ENCODE measurements at regions of chr15 and their contacts with region 1.

Region 1: GRCh38 chr15:89057504-89058133 is 30.6 kb upstream of the ABHD2 start:
- DNase-seq: peak; percentile 79
- H3K4me3 ChIP-seq: no peak overlapping the region
- H3K27ac ChIP-seq: no peak overlapping the region
- H3K4me1 ChIP-seq: no peaks in the 10 kb centered on the region
- H3K27me3 ChIP-seq: no peaks in the 10 kb centered on the region
- CTCF ChIP-seq: peak; percentile 95 to 99
- POLR2A ChIP-seq: no peak

Region 2: GRCh38 chr15:89041507-89041906 is 16.1 kb before region 1 on chr15:
- CTCF ChIA-PET with region 1: no interaction called
- POLR2A ChIA-PET with region 1: no interaction called
- dilution Hi-C with region 1: no loop called
- intact Hi-C with region 1: no loop called
- DNase-seq: no peak
- H3K4me3 ChIP-seq: no peak overlapping the region
- H3K27ac ChIP-seq: no peak overlapping the region
- H3K4me1 ChIP-seq: no peaks in the 10 kb centered on the region
- H3K27me3 ChIP-seq: no peaks in the 10 kb centered on the region
- CTCF ChIP-seq: no peak
- POLR2A ChIP-seq: no peak

Region 3: GRCh38 chr15:89087830-89088604 is 30.4 kb after region 1 on chr15 and contains the start of gene ABHD2:
- CTCF ChIA-PET with region 1: interaction called, 15 read pairs
- POLR2A ChIA-PET with region 1: no interaction called
- dilution Hi-C with region 1: no loop called
- intact Hi-C with region 1: loop called (anchors 1 kb)
- DNase-seq: peak; percentile 100
- H3K4me3 ChIP-seq: peak within 1 kb of the TSS; percentile 5 to 63 (median 36)
- H3K27ac ChIP-seq: peak within 1 kb of the TSS; percentile 71
- H3K4me1 ChIP-seq: peaks cover 42% of the 10 kb centered on the region
- H3K27me3 ChIP-seq: no peaks in the 10 kb centered on the region
- CTCF ChIP-seq: no peak
- POLR2A ChIP-seq: no peak
- total RNA-seq, gene ABHD2: 52.3 and 62.2 TPM in 2 replicates

Region 4: GRCh38 chr15:89129123-89129815 is 71.7 kb after region 1 on chr15:
- CTCF ChIA-PET with region 1: interaction called, 53 read pairs
- POLR2A ChIA-PET with region 1: no interaction called
- dilution Hi-C with region 1: no loop called
- intact Hi-C with region 1: loop called (anchors 1 kb)
- DNase-seq: peak; percentile 62
- H3K4me3 ChIP-seq: no peak overlapping the region
- H3K27ac ChIP-seq: peak overlapping the region; percentile 52
- H3K4me1 ChIP-seq: peaks cover 41% of the 10 kb centered on the region
- H3K27me3 ChIP-seq: no peaks in the 10 kb centered on the region
- CTCF ChIP-seq: peak; percentile 67 to 78
- POLR2A ChIP-seq: no peak

Region 5: DNA sequence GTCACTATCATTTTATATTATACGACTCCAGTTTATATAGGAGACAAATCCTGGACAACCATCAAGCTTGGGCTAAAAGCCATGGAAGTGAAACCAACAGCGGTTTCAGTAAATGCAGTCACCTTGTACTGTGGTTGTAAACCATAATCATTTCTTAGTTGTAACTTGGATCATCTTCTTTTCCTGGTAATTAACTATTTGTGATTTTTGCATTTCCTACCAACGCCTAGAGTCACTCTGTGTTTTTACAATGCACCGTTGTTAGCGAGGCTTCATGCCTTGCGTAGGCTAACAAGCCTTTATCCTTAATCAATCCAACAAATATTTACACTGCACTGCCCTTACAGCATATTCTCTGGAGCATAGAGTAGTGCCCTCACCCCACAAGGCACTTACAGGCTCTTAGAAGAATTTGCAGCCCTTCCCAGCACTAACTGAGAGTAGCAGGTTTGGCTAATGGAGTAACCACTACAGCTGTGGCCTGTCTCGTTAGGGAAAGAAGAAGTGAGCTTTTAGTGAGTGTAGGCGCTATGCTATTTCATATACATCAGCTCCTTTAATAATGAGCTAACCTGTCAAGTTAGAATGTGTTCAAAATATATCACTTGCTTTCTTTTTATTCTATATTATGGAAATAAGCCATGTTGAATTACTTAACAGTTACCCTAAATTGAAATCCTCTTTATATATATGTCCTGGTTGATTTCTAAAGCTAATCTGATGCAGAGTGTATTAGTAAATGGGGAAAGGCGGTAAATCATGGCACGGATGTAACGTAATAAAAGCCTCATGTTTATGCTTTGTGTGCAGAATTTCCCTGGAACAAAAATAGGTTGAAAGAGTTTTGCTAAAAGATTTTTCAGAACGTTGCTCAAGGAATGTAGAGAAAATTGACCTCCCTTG is 93.4 kb after region 1 on chr15:
- CTCF ChIA-PET with region 1: interaction called, 11 read pairs
- POLR2A ChIA-PET with region 1: no interaction called
- dilution Hi-C with region 1: loop called (anchors 25 kb)
- intact Hi-C with region 1: no loop called
- DNase-seq: no peak
- H3K4me3 ChIP-seq: no peak overlapping the region
- H3K27ac ChIP-seq: no peak overlapping the region
- H3K4me1 ChIP-seq: peaks cover 8% of the 10 kb centered on the region
- H3K27me3 ChIP-seq: no peaks in the 10 kb centered on the region
- CTCF ChIP-seq: no peak
- POLR2A ChIP-seq: no peak

Region 6: DNA sequence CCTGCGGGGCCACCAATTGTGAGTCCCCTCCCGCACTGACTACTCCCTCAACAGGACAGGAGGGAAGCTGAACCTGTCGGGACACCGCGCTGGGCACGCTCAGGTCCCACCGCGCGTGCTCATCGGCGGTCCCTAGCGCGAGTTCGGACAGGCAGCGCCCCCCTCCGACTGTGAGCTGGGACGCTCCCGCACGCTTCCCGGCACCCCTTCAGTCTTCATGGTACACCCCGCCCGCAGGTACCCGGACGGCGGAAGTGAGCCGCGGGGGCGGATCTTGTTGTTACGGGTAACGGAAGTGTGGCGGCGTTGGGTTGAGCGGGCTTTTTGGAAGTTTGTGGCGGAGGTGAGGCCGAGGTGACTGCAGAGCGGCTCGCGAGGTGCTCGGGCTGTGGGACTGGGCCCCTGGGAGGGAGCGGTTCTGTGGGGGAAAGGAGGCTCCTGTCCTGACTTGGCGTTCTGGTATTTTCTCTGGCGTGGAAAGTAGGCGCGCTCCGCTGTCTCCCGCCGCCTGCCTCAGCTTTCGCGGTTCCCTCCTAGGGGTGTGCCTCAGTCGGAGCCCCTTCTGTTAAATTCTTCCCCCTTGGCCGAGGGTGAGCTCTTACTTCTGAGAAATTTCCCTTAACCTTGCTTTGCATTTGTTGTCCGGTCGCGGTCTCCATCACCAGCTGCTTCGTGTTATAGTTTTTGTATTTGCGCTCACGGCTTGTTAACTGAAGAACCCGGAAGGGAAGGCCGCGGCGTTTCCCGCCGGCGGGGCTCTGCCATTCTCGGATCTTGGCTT is 186.3 kb after region 1 on chr15 and contains the start of gene FANCI:
- CTCF ChIA-PET with region 1: no interaction called
- POLR2A ChIA-PET with region 1: no interaction called
- dilution Hi-C with region 1: no loop called
- intact Hi-C with region 1: loop called (anchors 1 kb)
- DNase-seq: peak; percentile 92
- H3K4me3 ChIP-seq: peak within 1 kb of the TSS; percentile 81 to 92 (median 89)
- H3K27ac ChIP-seq: peak within 1 kb of the TSS; percentile 65
- H3K4me1 ChIP-seq: peaks cover 15% of the 10 kb centered on the region
- H3K27me3 ChIP-seq: peaks cover 5 to 7% of the 10 kb centered on the region in 2 experiments
- CTCF ChIP-seq: peak; percentile 45 to 51
- POLR2A ChIP-seq: no peak
- total RNA-seq, gene FANCI: 65.9 and 74.7 TPM in 2 replicates

Measured in endothelial cell of umbilical vein (primary cell).